GM10248 (cell line): ENCODE measurements at regions of chr20 and their contacts with region 1.

Region 1: DNA sequence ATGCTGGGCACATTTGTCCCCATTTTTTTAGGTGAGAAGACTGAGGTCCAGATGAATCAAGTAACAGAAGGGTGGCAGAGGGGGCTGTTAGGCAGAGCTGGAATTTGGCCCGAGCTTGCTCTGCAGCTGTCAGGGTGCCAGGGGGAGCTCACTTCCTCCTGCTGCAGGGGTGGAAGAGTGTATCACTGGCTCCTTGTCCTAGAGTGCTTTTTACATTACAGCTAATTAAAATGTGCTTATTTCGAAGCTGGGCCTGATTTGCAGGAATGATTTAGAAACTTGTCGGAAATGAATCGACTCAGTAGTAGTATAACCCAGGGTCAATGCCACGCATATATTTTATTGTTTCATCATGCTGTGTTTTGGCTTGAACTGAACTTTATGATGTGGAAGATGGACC is 11.1 kb downstream of the TOX2 start:
- DNase-seq: no peak
- CTCF ChIP-seq: no peak

Region 2: DNA sequence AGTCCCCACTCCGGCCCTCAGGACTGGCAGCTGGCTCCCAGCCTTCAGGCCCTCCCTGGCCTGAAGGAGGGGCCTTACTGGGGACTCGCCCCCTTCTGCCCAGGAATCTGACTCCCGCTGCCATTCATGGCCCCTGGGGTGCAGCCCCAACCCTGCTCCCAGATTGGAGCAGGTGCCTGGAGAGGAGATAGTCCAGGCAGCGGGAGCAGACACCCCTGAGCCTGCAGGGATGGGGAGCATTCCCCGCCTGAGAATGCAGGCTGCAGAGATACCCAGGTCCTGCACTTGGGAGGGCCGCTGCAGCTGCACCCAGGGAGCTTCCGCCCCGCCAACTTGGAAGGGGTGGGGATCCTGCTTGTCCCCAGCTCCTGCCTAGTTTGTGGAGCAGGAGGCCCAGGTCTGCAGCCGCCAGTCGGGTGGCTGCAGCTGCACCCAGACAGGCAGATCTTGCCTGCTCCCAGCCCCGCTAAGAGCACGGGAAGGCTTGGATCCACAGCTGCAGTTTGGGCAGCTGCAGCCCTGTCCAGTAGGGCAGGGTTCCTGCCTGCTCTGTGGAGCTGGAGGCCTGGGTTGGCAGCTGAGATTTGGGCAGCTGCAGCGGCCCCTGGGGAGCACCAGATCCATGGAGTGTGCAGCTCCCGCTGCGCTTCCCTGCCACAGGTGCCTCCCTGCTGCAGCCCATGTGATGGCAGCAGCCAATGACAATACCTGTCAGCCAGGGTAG is 204.2 kb before region 1 on chr20:
- CTCF ChIA-PET with region 1: no interaction called
- POLR2A ChIA-PET with region 1: no interaction called
- DNase-seq: no peak
- CTCF ChIP-seq: no peak

Region 3: DNA sequence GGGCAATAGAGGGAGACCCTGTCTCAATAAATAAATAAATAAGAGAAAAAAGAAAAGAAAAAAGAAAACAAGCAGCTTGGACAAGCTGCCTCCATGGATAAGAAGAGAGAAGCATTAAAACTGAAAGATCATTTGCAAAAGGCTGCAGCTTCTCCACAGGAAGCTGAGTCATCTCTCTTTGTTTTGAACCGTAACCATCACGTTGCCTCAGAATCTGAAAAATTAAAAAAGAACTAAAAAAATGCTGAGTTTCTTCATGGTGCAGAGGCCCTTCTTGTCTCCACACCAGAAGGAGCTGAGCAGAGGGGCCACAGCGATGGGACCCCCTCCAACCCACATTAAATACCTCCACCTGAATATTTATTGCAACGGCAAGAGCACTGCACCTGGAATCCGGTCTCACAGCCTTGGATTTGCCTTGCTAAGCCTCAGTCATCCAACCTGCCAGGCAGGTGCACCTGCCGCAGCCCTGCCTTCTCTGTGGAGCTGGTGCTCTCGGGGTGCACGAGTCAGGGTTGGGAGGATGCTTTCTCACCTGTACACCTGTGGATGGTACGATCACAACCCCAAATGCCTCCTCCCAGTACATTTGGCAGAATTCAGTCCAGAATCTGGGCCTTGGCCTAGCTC is 17.0 kb after region 1 on chr20:
- CTCF ChIA-PET with region 1: interaction called, 17 read pairs
- POLR2A ChIA-PET with region 1: no interaction called
- DNase-seq: peak; percentile 77
- CTCF ChIP-seq: no peak